Sigmoid colon (tissue), 7 donors: ENCODE measurements at regions of chr6 and their contacts with region 1.

Region 1: GRCh38 chr6:121055572-121056163 is 278.6 kb downstream of the TBC1D32 start:
- DNase-seq: no peak
- H3K4me3 ChIP-seq: no peak overlapping the region
- H3K27ac ChIP-seq: no peak overlapping the region
- H3K4me1 ChIP-seq: no peaks in the 10 kb centered on the region
- H3K27me3 ChIP-seq: no peaks in the 10 kb centered on the region
- CTCF ChIP-seq: peak in 3 of 4 experiments; percentile 21 to 57 (median 33)
- EP300 ChIP-seq: no peak
- POLR2A ChIP-seq: no peak

Region 2: DNA sequence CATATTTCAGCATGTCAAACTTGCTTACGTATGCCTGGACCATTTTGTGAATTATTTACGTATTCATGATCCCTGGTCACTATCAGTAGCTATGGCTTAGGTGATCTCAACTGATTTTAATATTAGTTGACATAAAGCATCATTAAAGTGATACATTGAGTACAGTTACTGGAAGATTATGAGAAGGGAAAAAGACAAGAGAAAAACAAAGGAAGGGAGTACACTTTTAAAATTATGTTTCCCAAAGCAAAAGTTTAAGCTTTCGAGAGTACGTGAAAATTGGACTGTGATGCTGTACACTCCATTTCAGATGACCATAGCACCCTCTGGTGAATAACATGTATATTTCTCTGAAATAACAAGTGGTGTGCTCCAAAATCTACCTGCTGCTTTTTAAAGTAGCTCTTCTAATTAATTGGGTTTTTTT is 1128.7 kb after region 1 on chr6:
- intact Hi-C with region 1: loop called (anchors 10 kb)
- DNase-seq: no peak
- H3K4me3 ChIP-seq: no peak overlapping the region
- H3K27ac ChIP-seq: peak overlapping the region in 1 of 4 donors; percentile 15
- H3K4me1 ChIP-seq: no peaks in the 10 kb centered on the region
- H3K27me3 ChIP-seq: no peaks in the 10 kb centered on the region
- CTCF ChIP-seq: peak in 3 of 4 experiments; percentile 14 to 49 (median 40)
- EP300 ChIP-seq: no peak
- POLR2A ChIP-seq: no peak